ENCODE measurements at regions of chr11 and their contacts with region 1.

Region 1: GRCh38 chr11:8328848-8329330 is 65.2 kb upstream of the LMO1 start:
- DNase-seq: peak; percentile 90

Region 2: DNA sequence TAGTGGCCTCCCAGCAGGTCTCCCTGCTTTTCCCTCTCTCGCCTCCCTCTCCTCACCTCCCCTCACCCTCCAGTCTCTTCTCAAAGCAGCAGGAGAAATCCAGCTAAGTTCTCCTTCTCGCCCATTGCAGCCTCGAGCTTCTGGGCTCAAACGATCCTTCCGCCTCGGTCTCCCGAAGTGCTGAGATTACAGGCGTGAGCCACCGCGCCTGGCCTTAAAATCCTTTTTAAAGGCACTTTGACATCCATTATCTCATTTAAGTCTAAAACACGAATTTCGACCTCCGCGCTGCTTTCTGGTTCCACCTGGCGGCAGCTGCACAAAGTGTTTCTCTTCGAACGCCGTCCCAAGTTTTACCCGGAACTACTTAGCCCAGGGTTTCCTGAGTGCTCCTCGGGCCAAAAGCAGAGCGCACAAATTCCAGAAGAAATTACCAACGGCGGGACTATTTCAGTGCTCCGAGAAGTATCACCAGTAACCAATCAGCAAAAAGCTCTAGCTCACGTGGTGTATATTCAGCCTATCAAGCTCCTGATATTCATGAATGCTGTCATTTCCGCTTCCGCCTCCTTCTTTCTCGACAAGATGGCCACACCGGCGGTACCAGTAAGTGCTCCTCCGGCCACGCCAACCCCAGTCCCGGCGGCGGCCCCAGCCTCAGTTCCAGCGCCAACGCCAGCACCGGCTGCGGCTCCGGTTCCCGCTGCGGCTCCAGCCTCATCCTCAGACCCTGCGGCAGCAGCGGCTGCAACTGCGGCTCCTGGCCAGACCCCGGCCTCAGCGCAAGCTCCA is 341.9 kb before region 1 on chr11 and contains the start of gene EIF3F:
- CTCF ChIA-PET with region 1: no interaction called
- POLR2A ChIA-PET with region 1: no interaction called
- DNase-seq: peak; percentile 89

Region 3: GRCh38 chr11:8156877-8157276 is 172.0 kb before region 1 on chr11:
- CTCF ChIA-PET with region 1: no interaction called
- POLR2A ChIA-PET with region 1: no interaction called
- DNase-seq: no peak

Region 4: GRCh38 chr11:8224711-8225110 is 104.2 kb before region 1 on chr11:
- CTCF ChIA-PET with region 1: interaction called, 11 read pairs
- POLR2A ChIA-PET with region 1: no interaction called
- DNase-seq: no peak

Region 5: GRCh38 chr11:8298801-8299786 is 29.8 kb before region 1 on chr11:
- CTCF ChIA-PET with region 1: no interaction called
- POLR2A ChIA-PET with region 1: no interaction called
- DNase-seq: no peak

Region 6: GRCh38 chr11:8309311-8309710 is 19.6 kb before region 1 on chr11:
- CTCF ChIA-PET with region 1: no interaction called
- POLR2A ChIA-PET with region 1: no interaction called
- DNase-seq: no peak

Measured in HEK293T (cell line).